Endothelial cell of umbilical vein (primary cell): ENCODE measurements at regions of chr1 and their contacts with region 1.

Region 1: GRCh38 chr1:8314346-8315280 is 3.3 kb upstream of the SLC45A1 start:
- DNase-seq: peak; percentile 76
- H3K4me3 ChIP-seq: no peak overlapping the region
- H3K27ac ChIP-seq: no peak overlapping the region
- H3K4me1 ChIP-seq: peaks cover 7% of the 10 kb centered on the region
- H3K27me3 ChIP-seq: no peaks in the 10 kb centered on the region
- CTCF ChIP-seq: peak; percentile 86 to 88
- POLR2A ChIP-seq: no peak

Region 2: GRCh38 chr1:7988576-7988975 is 326.0 kb before region 1 on chr1:
- CTCF ChIA-PET with region 1: interaction called, 147 read pairs
- POLR2A ChIA-PET with region 1: no interaction called
- dilution Hi-C with region 1: no loop called
- intact Hi-C with region 1: no loop called
- DNase-seq: no peak
- H3K4me3 ChIP-seq: no peak overlapping the region
- H3K27ac ChIP-seq: no peak overlapping the region
- H3K4me1 ChIP-seq: no peaks in the 10 kb centered on the region
- H3K27me3 ChIP-seq: no peaks in the 10 kb centered on the region
- CTCF ChIP-seq: no peak
- POLR2A ChIP-seq: no peak

Region 3: DNA sequence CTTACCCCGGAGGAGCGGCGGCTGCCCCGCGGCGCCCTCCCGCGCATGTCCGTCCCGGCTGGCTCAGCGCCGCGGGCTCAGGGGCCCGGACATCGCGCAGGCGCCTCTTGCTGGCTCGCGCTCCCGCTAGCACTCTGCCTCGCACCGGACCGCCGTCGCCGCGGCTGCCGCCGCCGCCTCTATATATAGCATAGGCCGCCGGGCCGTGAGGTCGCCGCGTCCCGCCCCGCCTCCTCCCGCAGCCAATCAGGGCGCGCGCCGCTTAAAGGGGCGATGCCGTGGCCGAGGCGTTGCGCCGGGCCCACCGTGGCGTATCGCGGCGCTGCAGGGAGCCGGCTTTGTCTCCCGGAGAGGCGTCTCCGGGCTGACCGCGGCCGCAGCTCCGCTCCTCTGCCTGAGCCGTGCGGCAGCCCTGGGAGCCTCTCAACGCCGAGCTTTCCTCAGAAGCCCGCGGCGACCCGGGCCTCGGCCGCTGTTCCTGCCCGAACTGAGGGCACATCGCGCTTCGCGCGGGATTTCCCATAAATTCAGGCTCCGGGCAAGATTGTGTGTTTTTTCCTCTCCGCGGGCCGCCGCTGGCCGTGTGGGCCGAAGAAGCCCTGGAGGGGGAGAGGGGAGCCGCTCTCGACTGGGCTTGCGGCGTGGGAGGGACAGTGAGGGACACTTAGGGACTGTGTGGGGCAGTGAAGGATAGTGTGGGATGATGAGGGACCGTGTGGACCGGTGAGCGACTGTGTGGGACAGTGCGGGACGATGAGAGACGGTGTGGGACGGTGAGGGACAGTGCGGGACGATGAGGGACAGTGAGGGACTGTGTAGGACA is 288.2 kb before region 1 on chr1 and contains the start of gene ERRFI1:
- CTCF ChIA-PET with region 1: interaction called, 396 read pairs
- POLR2A ChIA-PET with region 1: interaction called, 6 read pairs
- dilution Hi-C with region 1: no loop called
- intact Hi-C with region 1: loop called (anchors 1 kb)
- DNase-seq: peak; percentile 94
- H3K4me3 ChIP-seq: peak within 1 kb of the TSS; percentile 81 to 98 (median 94)
- H3K27ac ChIP-seq: peak within 1 kb of the TSS; percentile 63
- H3K4me1 ChIP-seq: peaks cover 57% of the 10 kb centered on the region
- H3K27me3 ChIP-seq: no peaks in the 10 kb centered on the region
- CTCF ChIP-seq: no peak
- POLR2A ChIP-seq: peak; percentile 99
- total RNA-seq, gene ERRFI1: 28.1 and 31.2 TPM in 2 replicates

Region 4: DNA sequence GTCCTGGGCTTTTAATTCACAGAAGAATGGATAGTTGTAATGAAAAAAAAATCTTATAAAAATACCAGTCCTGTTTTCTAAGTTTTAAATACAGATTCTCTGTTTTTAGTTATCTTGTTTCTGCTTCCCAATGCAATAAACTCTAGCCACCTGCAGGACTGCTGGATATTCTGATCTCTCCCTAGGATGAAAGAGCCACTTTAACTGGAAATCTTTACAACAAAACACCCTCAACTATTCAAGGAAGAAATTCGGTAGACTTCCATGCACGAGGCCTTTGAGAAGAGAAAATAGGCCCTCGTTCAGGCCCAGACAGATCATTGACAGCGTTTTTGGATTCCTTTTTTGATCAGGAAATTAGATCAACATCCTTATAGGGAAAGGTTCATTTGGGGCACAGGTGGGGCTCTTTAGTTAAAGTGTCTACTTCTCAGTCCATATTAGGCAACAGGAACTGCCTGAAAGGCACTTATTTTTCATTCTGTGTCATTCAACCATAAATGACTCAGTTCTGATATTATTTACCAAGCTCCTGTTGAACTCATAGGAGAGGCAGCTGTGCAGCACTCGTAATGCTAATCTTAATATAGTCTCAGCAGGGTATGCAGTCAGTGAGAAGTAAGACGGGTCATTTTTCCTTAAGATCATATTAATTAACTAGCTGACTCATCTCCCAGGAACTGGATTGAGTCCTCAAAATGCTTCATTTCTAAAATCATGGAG is 217.4 kb before region 1 on chr1:
- CTCF ChIA-PET with region 1: interaction called, 15 read pairs
- POLR2A ChIA-PET with region 1: no interaction called
- dilution Hi-C with region 1: no loop called
- intact Hi-C with region 1: no loop called
- DNase-seq: peak; percentile 94
- H3K4me3 ChIP-seq: peak overlapping the region in 1 of 3 experiments; percentile 20
- H3K27ac ChIP-seq: peak overlapping the region; percentile 98
- H3K4me1 ChIP-seq: peaks cover 49% of the 10 kb centered on the region
- H3K27me3 ChIP-seq: no peaks in the 10 kb centered on the region
- CTCF ChIP-seq: no peak
- POLR2A ChIP-seq: no peak

Region 5: DNA sequence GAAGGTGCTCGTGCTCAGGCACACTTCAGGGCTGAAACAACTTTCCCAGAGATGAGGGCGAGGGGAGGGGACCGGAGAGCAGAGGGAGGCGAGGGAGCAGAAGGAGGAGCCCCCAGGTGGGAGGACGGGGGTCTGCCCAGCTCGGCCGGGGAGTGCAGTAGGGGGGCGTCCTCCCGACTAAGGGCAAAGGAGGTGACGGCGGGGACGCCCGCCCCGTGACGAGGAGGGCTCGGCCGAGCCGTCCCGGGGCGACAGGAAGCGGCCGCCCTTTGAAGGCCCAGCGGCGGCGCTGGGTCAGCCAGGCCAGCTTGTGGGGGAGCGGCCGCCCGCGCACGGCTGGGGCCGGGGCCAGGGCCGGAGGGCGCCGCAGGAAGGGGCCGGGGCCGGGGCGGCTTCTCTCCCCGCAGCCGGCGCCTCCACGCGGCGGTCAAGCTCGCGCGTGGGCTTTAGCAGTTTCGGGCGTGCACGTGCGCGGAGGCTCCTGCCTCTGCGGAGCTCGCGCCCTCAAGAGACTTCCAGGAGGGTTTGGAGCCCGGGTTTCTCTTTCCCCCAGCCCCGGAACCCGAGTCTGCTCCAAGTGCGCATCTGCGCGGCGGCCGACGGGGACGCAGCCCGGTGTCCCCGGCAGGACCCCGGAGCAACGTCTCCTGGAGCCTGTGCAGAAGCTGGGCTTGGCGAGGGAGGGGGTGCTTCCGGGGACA is 97.5 kb before region 1 on chr1:
- CTCF ChIA-PET with region 1: interaction called, 8 read pairs
- POLR2A ChIA-PET with region 1: no interaction called
- dilution Hi-C with region 1: no loop called
- intact Hi-C with region 1: loop called (anchors 2 kb)
- DNase-seq: peak; percentile 26
- H3K4me3 ChIP-seq: peak overlapping the region in 2 of 3 experiments; percentile 30 to 43
- H3K27ac ChIP-seq: peak overlapping the region; percentile 58
- H3K4me1 ChIP-seq: peaks cover 15% of the 10 kb centered on the region
- H3K27me3 ChIP-seq: no peaks in the 10 kb centered on the region
- CTCF ChIP-seq: no peak
- POLR2A ChIP-seq: no peak

Region 6: GRCh38 chr1:8294170-8294697 is 20.4 kb before region 1 on chr1:
- CTCF ChIA-PET with region 1: interaction called, 10 read pairs
- POLR2A ChIA-PET with region 1: no interaction called
- dilution Hi-C with region 1: no loop called
- intact Hi-C with region 1: no loop called
- DNase-seq: no peak
- H3K4me3 ChIP-seq: no peak overlapping the region
- H3K27ac ChIP-seq: no peak overlapping the region
- H3K4me1 ChIP-seq: no peaks in the 10 kb centered on the region
- H3K27me3 ChIP-seq: no peaks in the 10 kb centered on the region
- CTCF ChIP-seq: no peak
- POLR2A ChIP-seq: no peak